ENCODE measurements at regions of chr2 and their contacts with region 1.

Region 1: DNA sequence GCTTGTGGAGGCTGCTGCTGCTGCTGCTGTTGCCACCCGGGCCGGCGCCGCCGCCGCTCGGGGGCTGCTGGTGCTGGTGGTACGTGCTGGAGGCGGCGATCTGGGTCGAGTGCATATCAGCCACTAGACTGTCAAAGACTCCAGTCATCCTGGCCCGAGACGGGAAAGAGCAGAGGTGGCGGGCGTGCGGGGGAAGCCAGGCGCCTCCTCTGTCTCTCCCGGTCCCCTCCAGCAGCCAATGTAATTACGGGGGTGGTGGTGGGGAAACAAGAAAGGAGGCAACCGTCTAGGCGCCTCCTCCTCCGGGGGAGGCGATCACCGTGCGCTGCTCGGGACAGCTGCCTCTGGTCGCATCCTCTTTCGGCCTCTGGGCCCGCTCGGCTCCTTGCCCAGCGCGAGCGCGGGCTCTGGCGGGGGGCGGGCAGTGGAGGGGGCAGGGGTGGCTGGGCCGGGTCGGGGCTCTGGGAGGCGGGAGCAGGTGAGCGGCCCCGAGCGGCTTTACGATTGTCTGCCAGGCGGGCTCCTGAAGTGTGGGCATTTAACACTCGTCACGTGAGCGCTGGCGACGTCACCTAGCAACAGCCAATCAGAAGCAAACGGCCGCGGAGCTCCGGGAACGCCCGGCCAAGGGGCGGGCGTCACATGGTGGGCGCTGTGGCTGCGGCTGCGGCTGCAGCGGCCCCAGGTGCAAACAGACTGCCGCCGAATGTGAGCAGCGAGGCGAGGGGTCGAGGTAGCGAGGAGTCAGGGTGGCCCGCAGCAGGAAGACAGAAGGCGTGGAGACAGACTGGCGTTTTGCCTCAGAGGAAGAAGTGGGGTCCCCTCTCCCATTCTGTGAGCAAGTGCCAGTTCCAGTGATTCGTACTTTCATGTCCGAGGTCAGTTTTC is at the start of gene DLX2:
- DNase-seq: peak; percentile 57
- H3K4me3 ChIP-seq: peak within 1 kb of the TSS; percentile 76
- H3K27ac ChIP-seq: no peak within 1 kb of the TSS
- H3K27me3 ChIP-seq: peaks cover 2% of the 10 kb centered on the region
- CTCF ChIP-seq: no peak
- polyA plus RNA-seq, gene DLX2: 0.10 and 0.24 TPM in 2 replicates

Region 2: DNA sequence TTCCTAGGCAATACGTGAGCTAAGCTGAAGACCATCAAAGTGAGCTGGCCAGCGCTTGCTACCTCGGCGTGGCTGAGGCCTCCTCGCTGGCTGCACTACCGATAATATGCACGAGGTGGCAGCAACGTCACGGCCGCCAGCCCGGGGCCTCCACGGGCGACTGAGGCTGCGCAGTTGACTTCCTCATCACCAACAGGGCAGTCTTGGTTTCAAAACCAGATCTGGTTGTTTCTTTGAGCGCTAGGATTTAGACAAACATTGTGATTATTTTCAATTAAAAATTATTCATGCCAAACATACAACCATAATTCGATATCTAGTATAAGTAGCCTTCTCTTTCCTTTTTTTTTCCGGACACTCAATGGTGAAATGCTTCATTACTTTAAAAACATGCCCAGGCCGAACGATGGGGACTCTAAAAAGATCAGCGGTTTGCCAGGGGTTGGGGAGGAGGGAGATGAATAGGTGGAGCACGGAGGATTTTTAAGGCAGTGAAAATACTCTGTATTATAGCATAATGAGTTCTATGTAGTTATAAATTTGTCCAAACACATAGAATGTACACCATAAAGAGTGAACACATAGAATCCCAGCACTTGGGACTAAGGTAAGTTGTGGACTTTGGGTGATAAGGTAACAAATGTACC is 528.4 kb before region 1 on chr2:
- CTCF ChIA-PET with region 1: interaction called, 11 read pairs
- POLR2A ChIA-PET with region 1: no interaction called
- DNase-seq: peak; percentile 15
- H3K4me3 ChIP-seq: no peak overlapping the region
- H3K27ac ChIP-seq: no peak overlapping the region
- H3K27me3 ChIP-seq: peaks cover 4% of the 10 kb centered on the region
- CTCF ChIP-seq: peak; percentile 95

Region 3: DNA sequence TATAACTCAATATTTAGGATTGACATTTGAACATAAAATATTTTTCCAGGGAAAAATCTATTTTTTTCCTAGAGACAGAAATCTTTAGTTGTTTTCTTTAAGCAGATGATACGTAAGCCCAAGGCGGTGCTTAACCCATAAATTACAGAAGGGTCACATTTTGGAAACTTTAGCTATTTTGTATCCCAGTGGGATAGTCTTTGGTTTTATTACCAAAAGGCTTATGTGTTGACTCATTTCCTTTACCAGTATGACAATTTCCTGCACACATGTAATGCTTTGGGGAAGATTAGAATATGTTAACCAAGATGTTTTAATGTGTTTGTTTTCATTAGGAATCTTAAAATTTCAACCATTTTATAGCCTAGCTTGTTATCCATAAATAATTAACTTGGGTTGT is 390.6 kb before region 1 on chr2:
- CTCF ChIA-PET with region 1: interaction called, 137 read pairs
- POLR2A ChIA-PET with region 1: interaction called, 3 read pairs
- DNase-seq: no peak
- H3K4me3 ChIP-seq: no peak overlapping the region
- H3K27ac ChIP-seq: no peak overlapping the region
- H3K27me3 ChIP-seq: no peaks in the 10 kb centered on the region
- CTCF ChIP-seq: no peak

Region 4: GRCh38 chr2:171811245-171811628 is 291.4 kb before region 1 on chr2:
- CTCF ChIA-PET with region 1: interaction called, 39 read pairs
- POLR2A ChIA-PET with region 1: no interaction called
- DNase-seq: no peak
- H3K4me3 ChIP-seq: no peak overlapping the region
- H3K27ac ChIP-seq: no peak overlapping the region
- H3K27me3 ChIP-seq: no peaks in the 10 kb centered on the region
- CTCF ChIP-seq: peak; percentile 35

Region 5: DNA sequence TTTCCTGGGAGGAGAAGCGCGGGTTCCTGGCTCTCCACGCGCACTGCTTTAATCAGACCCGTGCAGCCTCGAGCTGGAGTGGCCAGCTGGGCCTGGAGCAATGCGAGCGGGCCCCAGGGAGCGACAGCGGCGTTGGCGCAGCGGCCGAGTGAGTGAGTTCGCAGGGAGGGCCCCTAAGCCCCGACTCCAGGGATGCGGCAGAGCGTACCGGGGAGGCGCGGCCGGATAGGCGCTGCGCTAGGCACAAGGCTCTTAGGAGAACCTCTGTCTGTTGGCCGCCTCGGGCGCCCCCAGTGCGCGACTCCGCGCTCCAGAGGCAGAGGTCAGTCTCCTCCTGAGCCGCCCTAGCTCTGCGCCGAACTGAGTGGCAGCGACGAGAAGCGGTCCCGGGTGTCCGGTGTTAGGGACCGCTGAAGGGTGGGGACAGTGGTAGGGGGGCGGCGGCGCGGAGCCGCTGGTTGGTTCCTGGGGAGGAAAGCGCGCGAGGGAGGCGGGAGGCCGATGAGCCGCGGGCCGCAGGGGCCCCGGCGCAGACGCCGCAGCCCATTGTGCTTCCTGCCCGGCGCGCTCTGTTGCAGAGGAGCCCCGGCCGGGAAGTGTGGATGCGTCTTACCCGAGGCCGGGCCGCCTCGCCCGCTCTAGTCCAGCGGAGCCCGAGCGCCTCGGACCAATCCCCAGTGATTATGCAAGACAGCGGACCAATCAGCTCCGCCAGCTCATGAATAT is 17.7 kb before region 1 on chr2:
- CTCF ChIA-PET with region 1: interaction called, 4 read pairs
- POLR2A ChIA-PET with region 1: interaction called, 24 read pairs
- DNase-seq: peak; percentile 87
- H3K4me3 ChIP-seq: peak overlapping the region; percentile 63
- H3K27ac ChIP-seq: peak overlapping the region; percentile 61
- H3K27me3 ChIP-seq: peaks cover 88% of the 10 kb centered on the region
- CTCF ChIP-seq: no peak

Region 6: DNA sequence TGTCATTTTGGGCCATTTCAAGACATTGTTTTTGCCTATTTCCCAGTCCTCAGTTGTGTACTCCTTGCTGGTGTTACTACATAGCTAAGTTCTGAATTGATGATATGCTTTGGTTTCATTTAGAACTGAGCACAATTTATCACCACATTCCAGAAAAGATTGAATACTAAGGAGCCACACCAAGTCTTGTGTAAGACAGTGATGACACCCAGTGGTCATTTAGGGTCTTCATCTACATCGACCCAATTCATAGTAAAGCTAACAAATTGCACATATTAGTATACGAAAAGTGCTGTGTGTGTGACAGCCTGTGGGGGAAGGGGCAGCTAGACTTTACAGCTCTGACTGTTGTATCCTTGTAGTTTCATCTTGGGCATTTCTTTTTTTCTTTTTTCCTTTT is 11.0 kb after region 1 on chr2:
- CTCF ChIA-PET with region 1: interaction called, 13 read pairs
- POLR2A ChIA-PET with region 1: no interaction called
- DNase-seq: no peak
- H3K4me3 ChIP-seq: no peak overlapping the region
- H3K27ac ChIP-seq: no peak overlapping the region
- H3K27me3 ChIP-seq: no peaks in the 10 kb centered on the region
- CTCF ChIP-seq: peak; percentile 39

Region 7: GRCh38 chr2:172131713-172132555 is 29.3 kb after region 1 on chr2:
- CTCF ChIA-PET with region 1: interaction called, 10 read pairs
- POLR2A ChIA-PET with region 1: interaction called, 3 read pairs
- DNase-seq: no peak
- H3K4me3 ChIP-seq: no peak overlapping the region
- H3K27ac ChIP-seq: no peak overlapping the region
- H3K27me3 ChIP-seq: peaks cover 3% of the 10 kb centered on the region
- CTCF ChIP-seq: no peak